Activated CD4-positive, alpha-beta memory T cell treated with anti-CD3 and anti-CD28 coated beads for 36 hours (primary cell): ENCODE measurements at regions of chr11 and their contacts with region 1.

Region 1: GRCh38 chr11:133834682-133835592 is 10.4 kb downstream of the SPATA19 start:
- DNase-seq: peak; percentile 68
- H3K4me3 Mint-ChIP-seq: no peak overlapping the region
- H3K27ac Mint-ChIP-seq: no peak overlapping the region
- H3K4me1 Mint-ChIP-seq: peaks cover 10% of the 10 kb centered on the region
- H3K27me3 Mint-ChIP-seq: peaks cover 2% of the 10 kb centered on the region

Region 2: DNA sequence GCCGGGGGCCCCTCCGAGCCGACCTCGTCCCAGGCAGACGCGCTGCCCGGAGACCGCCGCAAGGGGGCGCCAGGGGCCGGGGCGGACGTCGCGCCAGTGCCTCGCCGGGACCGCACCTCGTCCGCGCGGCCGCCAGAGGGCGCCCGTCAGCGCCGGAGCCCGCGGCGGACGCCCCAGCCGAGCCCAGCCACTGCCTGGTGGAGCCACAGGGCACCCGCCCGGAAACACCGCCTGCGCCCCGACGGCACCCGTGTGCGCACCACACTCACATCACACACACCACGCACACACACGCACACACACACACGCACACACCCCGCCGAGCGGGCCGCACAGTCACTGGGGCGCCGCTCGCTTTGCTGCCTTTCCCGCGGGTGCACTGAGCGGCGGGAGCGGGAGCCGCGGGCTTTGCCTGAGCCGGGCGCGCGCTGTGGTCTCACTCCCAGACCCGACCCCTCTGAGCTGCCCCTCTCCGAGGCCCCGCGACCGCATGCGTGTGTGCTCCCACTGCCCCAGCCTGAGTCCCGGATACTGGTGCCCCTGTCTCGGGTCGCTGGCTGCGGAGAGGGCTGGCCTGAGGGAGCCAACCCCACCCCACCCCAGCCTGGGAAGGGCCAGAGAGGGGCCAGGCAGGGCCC is 752.0 kb before region 1 on chr11:
- CTCF ChIA-PET with region 1: interaction called, 12 read pairs
- POLR2A ChIA-PET with region 1: no interaction called
- intact Hi-C with region 1: loop called (anchors 5 kb)
- DNase-seq: peak; percentile 73
- H3K4me3 Mint-ChIP-seq: no peak overlapping the region
- H3K27ac Mint-ChIP-seq: no peak overlapping the region
- H3K4me1 Mint-ChIP-seq: no peaks in the 10 kb centered on the region
- H3K27me3 Mint-ChIP-seq: peaks cover 42% of the 10 kb centered on the region

Region 3: GRCh38 chr11:133134314-133135173 is 700.4 kb before region 1 on chr11:
- CTCF ChIA-PET with region 1: interaction called, 33 read pairs
- POLR2A ChIA-PET with region 1: no interaction called
- intact Hi-C with region 1: loop called (anchors 1 kb)
- DNase-seq: peak; percentile 56
- H3K4me3 Mint-ChIP-seq: no peak overlapping the region
- H3K27ac Mint-ChIP-seq: no peak overlapping the region
- H3K4me1 Mint-ChIP-seq: no peaks in the 10 kb centered on the region
- H3K27me3 Mint-ChIP-seq: peaks cover 7% of the 10 kb centered on the region

Region 4: DNA sequence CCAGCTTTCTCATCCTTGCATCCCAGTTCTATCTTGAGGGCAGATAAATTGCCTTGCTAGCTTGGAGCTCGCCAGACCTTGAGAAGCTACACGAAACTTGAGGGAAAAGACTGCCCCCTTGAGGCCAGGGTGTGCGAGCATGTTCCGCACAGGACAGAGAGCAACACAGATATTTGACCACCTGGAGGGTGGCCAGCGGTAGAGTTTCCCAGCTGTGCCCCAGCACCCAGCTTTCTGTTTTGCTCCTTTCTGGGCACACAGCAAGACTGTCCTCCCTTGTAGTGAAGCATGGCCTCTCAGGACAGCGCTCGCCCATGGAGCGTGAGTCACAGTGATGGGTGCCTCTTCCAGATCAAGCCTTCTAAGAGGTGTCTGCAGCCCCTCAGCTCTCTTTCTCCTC is 13.2 kb before region 1 on chr11:
- CTCF ChIA-PET with region 1: interaction called, 13 read pairs
- POLR2A ChIA-PET with region 1: no interaction called
- intact Hi-C with region 1: no loop called
- DNase-seq: peak; percentile 51
- H3K4me3 Mint-ChIP-seq: no peak overlapping the region
- H3K27ac Mint-ChIP-seq: no peak overlapping the region
- H3K4me1 Mint-ChIP-seq: no peaks in the 10 kb centered on the region
- H3K27me3 Mint-ChIP-seq: no peaks in the 10 kb centered on the region